Ovary (tissue), 10 donors: ENCODE measurements at regions of chr3 and their contacts with region 1.

Region 1: GRCh38 chr3:10232137-10232536 is 16.1 kb upstream of the TATDN2 start:
- DNase-seq: no peak
- H3K4me3 ChIP-seq: no peak overlapping the region
- H3K27ac ChIP-seq: no peak overlapping the region
- H3K4me1 ChIP-seq: no peaks in the 10 kb centered on the region
- H3K27me3 ChIP-seq: no peaks in the 10 kb centered on the region
- CTCF ChIP-seq: no peak
- EP300 ChIP-seq: no peak
- POLR2A ChIP-seq: no peak

Region 2: DNA sequence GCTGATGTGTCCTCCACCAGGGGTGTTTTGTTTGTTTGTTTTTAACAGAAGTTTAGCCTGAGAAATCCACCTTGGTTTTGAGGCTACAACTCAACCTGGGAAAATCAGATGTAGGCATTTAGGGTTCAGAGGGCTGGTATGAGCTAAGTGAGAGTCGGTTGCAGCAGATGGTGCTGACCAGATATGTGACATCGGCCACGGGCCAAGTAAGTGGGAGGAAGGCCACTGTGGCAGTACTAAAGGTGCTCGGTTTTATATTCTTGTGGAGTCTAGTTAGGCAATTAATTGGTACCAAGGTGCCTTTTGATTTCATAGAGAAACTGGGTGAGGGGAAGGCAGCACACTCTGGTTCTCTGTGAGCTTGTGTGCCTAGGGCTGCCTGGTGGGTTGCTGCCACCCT is 572.3 kb before region 1 on chr3:
- intact Hi-C with region 1: no loop called
- DNase-seq: no peak
- H3K4me3 ChIP-seq: no peak overlapping the region
- H3K27ac ChIP-seq: no peak overlapping the region
- H3K4me1 ChIP-seq: no peaks in the 10 kb centered on the region
- H3K27me3 ChIP-seq: no peaks in the 10 kb centered on the region
- CTCF ChIP-seq: no peak
- EP300 ChIP-seq: no peak
- POLR2A ChIP-seq: no peak

Region 3: GRCh38 chr3:10164546-10165393 is 67.4 kb before region 1 on chr3 and contains the start of gene IRAK2:
- intact Hi-C with region 1: loop called in 1 of 4 experiments (anchors 5 kb)
- DNase-seq: peak; percentile 69 to 82 (median 73)
- H3K4me3 ChIP-seq: peak within 1 kb of the TSS; percentile 86
- H3K27ac ChIP-seq: peak within 1 kb of the TSS; percentile 8 to 70
- H3K4me1 ChIP-seq: peaks cover 7% of the 10 kb centered on the region
- H3K27me3 ChIP-seq: no peaks in the 10 kb centered on the region
- CTCF ChIP-seq: peak; percentile 65 to 93 (median 77)
- EP300 ChIP-seq: no peak
- POLR2A ChIP-seq: no peak
- total RNA-seq, gene IRAK2: 1.4 to 1.8 (median 1.5) TPM

Region 4: DNA sequence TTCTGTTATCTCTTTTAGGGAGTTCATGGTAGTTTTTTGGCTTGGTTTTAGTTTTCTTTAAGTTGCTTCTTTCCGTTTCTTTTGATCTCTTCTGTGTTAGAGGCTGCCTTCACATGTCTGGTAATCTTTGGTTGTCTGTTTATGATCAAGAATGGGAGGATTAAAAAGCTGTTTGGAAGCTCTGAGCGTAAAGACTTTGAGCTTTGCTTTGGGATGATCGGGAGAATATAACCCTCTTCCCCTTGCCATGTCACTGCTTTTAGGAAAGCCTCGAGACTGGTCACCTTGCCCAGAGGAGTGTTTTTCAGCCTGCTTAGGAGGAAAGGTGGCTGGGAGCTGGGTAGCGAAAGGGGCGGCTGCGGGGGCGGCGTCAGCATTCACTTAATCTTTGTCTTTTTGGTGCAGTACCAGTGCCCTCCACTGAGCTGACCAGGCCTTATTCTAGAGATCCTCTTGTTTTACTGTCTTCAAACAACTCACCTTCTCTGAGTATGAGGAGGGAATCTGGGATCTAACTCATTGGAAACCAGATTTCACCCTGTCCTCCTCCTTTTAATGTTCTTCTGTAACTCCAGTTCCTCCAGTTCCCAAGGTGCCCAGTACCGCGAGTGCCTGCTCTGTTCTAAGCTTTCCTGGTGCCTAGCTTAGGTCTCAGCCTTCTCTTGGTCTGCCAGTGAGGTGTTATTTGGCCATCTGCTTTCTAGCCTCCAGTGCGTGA is 31.7 kb after region 1 on chr3:
- intact Hi-C with region 1: no loop called
- DNase-seq: peak; percentile 50 to 75 (median 63)
- H3K4me3 ChIP-seq: peak overlapping the region; percentile 6
- H3K27ac ChIP-seq: peak overlapping the region in 1 of 2 donors; percentile 67
- H3K4me1 ChIP-seq: peaks cover 6% of the 10 kb centered on the region
- H3K27me3 ChIP-seq: no peaks in the 10 kb centered on the region
- CTCF ChIP-seq: peak in 2 of 3 donors; percentile 46 to 54
- EP300 ChIP-seq: no peak
- POLR2A ChIP-seq: no peak